Activated CD4-positive, alpha-beta T cell treated with anti-CD3 and anti-CD28 coated beads for 36 hours (primary cell): ENCODE measurements at regions of chr7 and their contacts with region 1.

Region 1: GRCh38 chr7:85023045-85023712 is 163.7 kb downstream of the SEMA3D start:
- DNase-seq: peak; percentile 18
- ATAC-seq: no peak
- H3K4me3 Mint-ChIP-seq: no peak overlapping the region
- H3K27ac Mint-ChIP-seq: no peak overlapping the region
- H3K4me1 Mint-ChIP-seq: no peaks in the 10 kb centered on the region
- H3K27me3 Mint-ChIP-seq: peaks cover 3% of the 10 kb centered on the region

Region 2: GRCh38 chr7:83936056-83936708 is 1087.0 kb before region 1 on chr7:
- CTCF ChIA-PET with region 1: interaction called, 35 read pairs
- POLR2A ChIA-PET with region 1: no interaction called
- intact Hi-C with region 1: loop called (anchors 1 kb)
- DNase-seq: peak; percentile 68
- ATAC-seq: peak; percentile 30
- H3K4me3 Mint-ChIP-seq: no peak overlapping the region
- H3K27ac Mint-ChIP-seq: no peak overlapping the region
- H3K4me1 Mint-ChIP-seq: peaks cover 2% of the 10 kb centered on the region
- H3K27me3 Mint-ChIP-seq: no peaks in the 10 kb centered on the region

Region 3: GRCh38 chr7:85011127-85011526 is 12.1 kb before region 1 on chr7:
- CTCF ChIA-PET with region 1: interaction called, 7 read pairs
- POLR2A ChIA-PET with region 1: no interaction called
- intact Hi-C with region 1: loop called in 1 of 2 experiments (anchors 1 kb)
- DNase-seq: no peak
- ATAC-seq: no peak
- H3K4me3 Mint-ChIP-seq: no peak overlapping the region
- H3K27ac Mint-ChIP-seq: no peak overlapping the region
- H3K4me1 Mint-ChIP-seq: no peaks in the 10 kb centered on the region
- H3K27me3 Mint-ChIP-seq: no peaks in the 10 kb centered on the region

Region 4: GRCh38 chr7:85160223-85160622 is 137.0 kb after region 1 on chr7:
- CTCF ChIA-PET with region 1: no interaction called
- POLR2A ChIA-PET with region 1: no interaction called
- intact Hi-C with region 1: no loop called
- DNase-seq: peak; percentile 49
- ATAC-seq: peak; percentile 72
- H3K4me3 Mint-ChIP-seq: no peak overlapping the region
- H3K27ac Mint-ChIP-seq: no peak overlapping the region
- H3K4me1 Mint-ChIP-seq: peaks cover 8% of the 10 kb centered on the region
- H3K27me3 Mint-ChIP-seq: no peaks in the 10 kb centered on the region